CD8-positive, alpha-beta T cell (primary cell): ENCODE measurements at regions of chr16 and their contacts with region 1.

Region 1: DNA sequence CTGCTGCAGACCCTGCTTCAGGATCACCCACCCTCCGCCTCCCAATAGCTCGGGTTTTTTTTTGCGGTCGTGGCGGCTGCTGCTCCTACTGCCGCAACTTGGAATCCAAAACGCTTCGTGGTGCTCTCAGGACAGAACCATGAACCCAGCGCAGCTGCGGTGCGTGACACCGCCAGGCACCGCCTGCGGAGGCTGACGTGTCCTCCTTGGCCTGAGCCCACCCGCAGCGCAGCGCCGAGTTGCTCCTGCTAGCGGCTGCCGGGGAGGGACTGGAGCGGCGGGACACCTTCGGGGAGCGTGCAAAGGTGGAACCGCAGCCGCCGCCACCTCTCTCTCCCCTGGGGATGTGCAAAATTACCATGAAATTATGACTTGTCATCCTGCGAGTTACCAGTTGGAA is 1893.0 kb downstream of the TP53TG3F start:
- DNase-seq: no peak
- ATAC-seq: no peak
- H3K4me3 ChIP-seq: no peak overlapping the region
- H3K4me3 Mint-ChIP-seq: no peak overlapping the region
- H3K27ac ChIP-seq: no peak overlapping the region
- H3K27ac Mint-ChIP-seq: no peak overlapping the region
- H3K4me1 ChIP-seq: no peaks in the 10 kb centered on the region
- H3K4me1 Mint-ChIP-seq: no peaks in the 10 kb centered on the region
- H3K27me3 ChIP-seq: no peaks in the 10 kb centered on the region
- H3K27me3 Mint-ChIP-seq: no peaks in the 10 kb centered on the region
- CTCF ChIP-seq: no peak

Region 2: DNA sequence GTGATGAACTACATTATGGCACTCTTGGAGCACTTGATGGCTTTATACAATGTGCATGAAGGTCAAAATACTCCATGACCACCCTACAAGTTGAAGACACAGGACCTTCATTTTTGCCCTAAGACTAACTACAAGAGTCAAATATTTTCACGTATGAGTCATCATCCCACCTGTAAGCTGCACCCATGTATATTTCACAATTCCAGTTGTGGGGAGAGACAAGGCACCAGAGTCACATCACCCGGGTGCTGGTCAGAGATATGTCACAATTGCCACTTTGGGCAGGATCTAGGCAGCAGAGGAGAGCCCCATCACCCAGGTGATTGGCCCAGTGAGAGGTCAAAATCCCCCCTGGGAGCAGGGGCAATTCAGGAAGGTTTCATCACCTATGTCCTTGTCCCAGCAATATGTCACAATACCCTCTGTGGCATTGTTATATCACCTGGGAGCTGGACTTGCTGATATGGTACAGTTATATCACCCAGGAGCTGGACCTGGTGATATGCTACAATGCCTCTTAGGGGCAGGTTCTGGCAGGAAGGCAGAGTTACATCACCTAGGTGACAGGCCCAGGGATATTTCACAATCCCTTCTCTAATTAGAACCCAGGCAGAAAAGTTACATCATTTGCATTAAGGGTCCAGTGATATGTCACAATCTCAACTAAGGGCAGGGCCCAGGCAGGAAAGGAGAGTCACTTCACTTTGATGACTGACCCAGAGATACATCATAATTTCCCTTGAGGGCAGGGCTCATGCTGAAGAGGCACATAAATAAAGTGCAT is 53.8 kb before region 1 on chr16:
- CTCF ChIA-PET with region 1: no interaction called
- POLR2A ChIA-PET with region 1: no interaction called
- intact Hi-C with region 1: loop called in 1 of 2 experiments (anchors 10 kb)
- DNase-seq: no peak
- ATAC-seq: no peak
- H3K4me3 ChIP-seq: no peak overlapping the region
- H3K4me3 Mint-ChIP-seq: no peak overlapping the region
- H3K27ac ChIP-seq: no peak overlapping the region
- H3K27ac Mint-ChIP-seq: no peak overlapping the region
- H3K4me1 ChIP-seq: no peaks in the 10 kb centered on the region
- H3K4me1 Mint-ChIP-seq: no peaks in the 10 kb centered on the region
- H3K27me3 ChIP-seq: no peaks in the 10 kb centered on the region
- H3K27me3 Mint-ChIP-seq: no peaks in the 10 kb centered on the region
- CTCF ChIP-seq: no peak

Region 3: GRCh38 chr16:35339337-35339736 is 13.1 kb before region 1 on chr16:
- CTCF ChIA-PET with region 1: no interaction called
- POLR2A ChIA-PET with region 1: no interaction called
- intact Hi-C with region 1: no loop called
- DNase-seq: no peak
- ATAC-seq: no peak
- H3K4me3 ChIP-seq: no peak overlapping the region
- H3K4me3 Mint-ChIP-seq: no peak overlapping the region
- H3K27ac ChIP-seq: no peak overlapping the region
- H3K27ac Mint-ChIP-seq: no peak overlapping the region
- H3K4me1 ChIP-seq: no peaks in the 10 kb centered on the region
- H3K4me1 Mint-ChIP-seq: no peaks in the 10 kb centered on the region
- H3K27me3 ChIP-seq: no peaks in the 10 kb centered on the region
- H3K27me3 Mint-ChIP-seq: no peaks in the 10 kb centered on the region
- CTCF ChIP-seq: no peak

Region 4: GRCh38 chr16:35391328-35391727 is 38.9 kb after region 1 on chr16:
- CTCF ChIA-PET with region 1: no interaction called
- POLR2A ChIA-PET with region 1: no interaction called
- intact Hi-C with region 1: no loop called
- DNase-seq: peak in 2 of 9 experiments; percentile 26 to 27
- ATAC-seq: no peak
- H3K4me3 ChIP-seq: no peak overlapping the region
- H3K4me3 Mint-ChIP-seq: no peak overlapping the region
- H3K27ac ChIP-seq: no peak overlapping the region
- H3K27ac Mint-ChIP-seq: no peak overlapping the region
- H3K4me1 ChIP-seq: no peaks in the 10 kb centered on the region
- H3K4me1 Mint-ChIP-seq: no peaks in the 10 kb centered on the region
- H3K27me3 ChIP-seq: no peaks in the 10 kb centered on the region
- H3K27me3 Mint-ChIP-seq: no peaks in the 10 kb centered on the region
- CTCF ChIP-seq: no peak